ENCODE measurements at regions of chr12 and their contacts with region 1.

Region 1: DNA sequence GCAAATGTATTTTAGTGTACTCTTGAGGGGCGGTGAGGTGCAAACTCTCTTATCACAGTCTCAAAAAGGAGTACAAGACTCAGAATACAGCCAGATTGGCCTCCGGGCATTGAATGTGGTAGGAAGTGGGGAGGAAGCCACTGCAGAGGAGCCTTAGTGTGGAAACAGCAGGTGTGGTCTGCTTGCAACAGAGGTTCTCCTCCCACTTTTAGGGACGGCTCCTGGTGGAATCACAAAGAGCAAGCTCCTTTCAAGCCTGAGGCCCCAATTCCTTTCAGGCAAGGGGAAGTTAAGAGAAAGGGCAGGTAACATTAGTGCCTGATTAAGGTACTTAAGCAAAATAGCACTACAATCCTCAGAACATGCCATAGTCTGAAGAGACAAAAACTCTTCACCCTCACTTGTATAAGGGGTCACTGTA is 23.7 kb upstream of the SLC2A3 start:
- DNase-seq: peak in 8 of 9 donors; percentile 34 to 49 (median 40)
- ATAC-seq: peak; percentile 33
- H3K4me3 ChIP-seq: peak overlapping the region; percentile 79
- H3K4me3 Mint-ChIP-seq: peak overlapping the region; percentile 80 to 97 (median 89)
- H3K27ac ChIP-seq: peak overlapping the region; percentile 87
- H3K27ac Mint-ChIP-seq: peak overlapping the region; percentile 87 to 99 (median 95)
- H3K4me1 ChIP-seq: peaks cover 26 to 29% of the 10 kb centered on the region in 2 donors
- H3K4me1 Mint-ChIP-seq: peaks cover 27 to 51% (median 46%) of the 10 kb centered on the region in 7 donors
- H3K27me3 ChIP-seq: no peaks in the 10 kb centered on the region
- H3K27me3 Mint-ChIP-seq: no peaks in the 10 kb centered on the region

Region 2: DNA sequence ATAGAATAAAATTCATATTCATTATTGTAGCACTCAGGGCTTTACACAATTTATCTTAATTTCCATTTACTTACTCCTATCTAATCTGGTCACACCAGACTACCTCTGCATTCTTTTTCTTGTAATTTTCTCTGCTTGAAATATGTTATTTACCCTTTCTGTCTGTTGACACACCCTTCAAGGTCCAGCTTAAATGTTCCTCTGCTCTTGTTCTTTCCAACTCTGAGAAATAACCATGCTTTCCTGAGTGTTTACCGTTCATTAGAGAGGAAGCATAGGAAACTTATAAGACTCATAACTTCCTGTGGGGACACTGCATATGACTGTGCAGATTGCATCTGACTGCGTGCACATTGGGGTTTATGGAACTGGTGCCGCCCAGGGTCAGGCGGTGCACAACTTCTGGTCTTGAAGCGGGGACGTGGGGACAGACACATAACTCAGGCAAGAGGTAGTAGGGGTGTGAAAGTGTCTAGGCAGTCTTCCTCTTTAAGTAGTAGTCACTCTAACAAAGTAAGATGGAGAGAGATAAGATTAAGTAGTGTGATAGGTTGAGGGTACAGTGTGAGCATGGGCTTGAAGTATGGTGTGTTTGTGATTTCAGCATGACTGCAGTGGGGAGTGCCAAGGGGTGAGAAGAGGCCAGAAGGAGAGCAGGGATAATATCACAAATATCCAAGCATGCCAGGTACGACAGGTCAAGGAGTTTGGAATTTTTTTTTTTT is 30.3 kb after region 1 on chr12:
- CTCF ChIA-PET with region 1: interaction called, 13 read pairs
- POLR2A ChIA-PET with region 1: interaction called, 46 read pairs
- intact Hi-C with region 1: loop called (anchors 1 kb)
- DNase-seq: peak; percentile 22 to 73 (median 27)
- ATAC-seq: peak; percentile 94
- H3K4me3 ChIP-seq: no peak overlapping the region
- H3K4me3 Mint-ChIP-seq: peak overlapping the region; percentile 61 to 85 (median 72)
- H3K27ac ChIP-seq: no peak overlapping the region
- H3K27ac Mint-ChIP-seq: peak overlapping the region; percentile 71 to 92 (median 87)
- H3K4me1 ChIP-seq: peaks cover 19 to 20% of the 10 kb centered on the region in 2 donors
- H3K4me1 Mint-ChIP-seq: peaks cover 18 to 53% (median 24%) of the 10 kb centered on the region in 7 donors
- H3K27me3 ChIP-seq: no peaks in the 10 kb centered on the region
- H3K27me3 Mint-ChIP-seq: no peaks in the 10 kb centered on the region

Region 3: DNA sequence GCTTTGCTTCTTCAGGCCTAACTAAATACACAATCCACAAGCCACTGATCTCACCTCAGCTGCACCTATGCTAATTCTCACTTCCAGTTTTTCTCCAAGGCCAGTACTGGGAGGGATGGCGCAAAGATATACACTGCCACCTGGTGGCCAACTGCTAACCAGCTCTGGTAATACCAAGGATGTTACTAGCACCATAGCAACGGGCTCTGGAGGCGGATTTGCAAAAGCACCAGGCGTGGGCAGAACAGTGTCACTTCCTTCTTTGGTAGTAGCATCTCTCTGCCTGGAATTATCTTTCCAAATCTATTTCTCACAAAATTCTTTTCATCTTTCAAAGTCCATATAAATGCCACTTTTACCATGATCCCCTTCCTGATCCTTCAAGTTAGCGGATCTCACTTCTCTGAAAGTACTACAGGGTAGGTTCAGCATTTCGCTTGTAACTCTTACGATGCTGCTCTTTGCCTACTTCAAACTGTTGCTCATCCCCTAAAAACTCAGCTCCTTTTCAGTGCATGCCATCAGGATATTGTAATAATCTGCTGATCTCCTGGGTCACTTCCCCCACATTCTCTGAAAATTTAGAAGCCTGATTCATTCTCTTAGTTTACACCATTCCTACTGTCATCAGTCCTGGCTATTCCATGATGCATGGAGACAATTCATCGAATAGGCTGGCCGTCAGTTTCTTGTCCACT is 35.7 kb after region 1 on chr12:
- CTCF ChIA-PET with region 1: interaction called, 13 read pairs
- POLR2A ChIA-PET with region 1: interaction called, 46 read pairs
- intact Hi-C with region 1: loop called (anchors 1 kb)
- DNase-seq: peak; percentile 39 to 89 (median 84)
- ATAC-seq: peak; percentile 100
- H3K4me3 ChIP-seq: no peak overlapping the region
- H3K4me3 Mint-ChIP-seq: no peak overlapping the region
- H3K27ac ChIP-seq: peak overlapping the region; percentile 60
- H3K27ac Mint-ChIP-seq: no peak overlapping the region
- H3K4me1 ChIP-seq: peaks cover 11 to 14% of the 10 kb centered on the region in 2 donors
- H3K4me1 Mint-ChIP-seq: peaks cover 9 to 28% (median 11%) of the 10 kb centered on the region in 7 donors
- H3K27me3 ChIP-seq: no peaks in the 10 kb centered on the region
- H3K27me3 Mint-ChIP-seq: no peaks in the 10 kb centered on the region

Region 4: DNA sequence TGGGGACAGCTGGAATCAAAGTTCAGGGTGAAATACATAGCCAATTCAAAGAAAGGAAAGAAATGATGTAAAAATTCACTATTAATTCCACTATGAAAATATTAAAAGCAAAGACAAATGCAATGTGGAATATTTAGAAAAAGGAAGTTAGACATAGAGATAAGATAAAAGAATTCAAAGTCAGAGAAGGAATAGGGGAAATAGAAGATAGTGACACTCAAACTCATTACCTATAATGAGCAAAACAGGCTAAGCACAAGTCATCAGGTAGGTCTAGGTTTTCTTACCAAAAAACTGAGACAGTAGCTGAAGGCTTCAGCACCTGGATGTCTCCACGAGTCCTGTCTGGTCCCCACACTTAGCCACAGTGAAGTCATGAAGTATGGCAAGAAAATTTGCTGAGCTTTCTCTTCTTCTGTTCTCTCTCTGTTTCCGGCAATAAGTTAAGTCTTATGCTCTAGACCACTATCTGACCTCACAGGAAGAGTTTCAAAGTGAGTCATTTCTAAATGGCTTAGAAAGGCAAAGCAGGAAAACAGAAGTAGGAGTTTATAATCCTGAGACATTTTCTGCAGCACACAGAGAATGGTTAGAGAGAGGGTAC is 106.4 kb after region 1 on chr12 and contains the start of gene C3AR1:
- CTCF ChIA-PET with region 1: no interaction called
- POLR2A ChIA-PET with region 1: no interaction called
- intact Hi-C with region 1: no loop called
- DNase-seq: peak in 8 of 9 donors; percentile 35 to 70 (median 67)
- ATAC-seq: peak; percentile 98
- H3K4me3 ChIP-seq: peak within 1 kb of the TSS; percentile 5
- H3K4me3 Mint-ChIP-seq: peak within 1 kb of the TSS; percentile 14 to 81 (median 48)
- H3K27ac ChIP-seq: peak within 1 kb of the TSS; percentile 61
- H3K27ac Mint-ChIP-seq: peak within 1 kb of the TSS; percentile 82 to 96 (median 90)
- H3K4me1 ChIP-seq: peaks cover 12 to 17% of the 10 kb centered on the region in 2 donors
- H3K4me1 Mint-ChIP-seq: peaks cover 17 to 33% (median 26%) of the 10 kb centered on the region in 7 donors
- H3K27me3 ChIP-seq: no peaks in the 10 kb centered on the region
- H3K27me3 Mint-ChIP-seq: no peaks in the 10 kb centered on the region
- total RNA-seq, gene C3AR1: 0.66 to 12.7 (median 3.0) TPM